Activated CD8-positive, alpha-beta T cell treated with anti-CD3 and anti-CD28 coated beads for 36 hours (primary cell): ENCODE measurements at regions of chr2 and their contacts with region 1.

Region 1: DNA sequence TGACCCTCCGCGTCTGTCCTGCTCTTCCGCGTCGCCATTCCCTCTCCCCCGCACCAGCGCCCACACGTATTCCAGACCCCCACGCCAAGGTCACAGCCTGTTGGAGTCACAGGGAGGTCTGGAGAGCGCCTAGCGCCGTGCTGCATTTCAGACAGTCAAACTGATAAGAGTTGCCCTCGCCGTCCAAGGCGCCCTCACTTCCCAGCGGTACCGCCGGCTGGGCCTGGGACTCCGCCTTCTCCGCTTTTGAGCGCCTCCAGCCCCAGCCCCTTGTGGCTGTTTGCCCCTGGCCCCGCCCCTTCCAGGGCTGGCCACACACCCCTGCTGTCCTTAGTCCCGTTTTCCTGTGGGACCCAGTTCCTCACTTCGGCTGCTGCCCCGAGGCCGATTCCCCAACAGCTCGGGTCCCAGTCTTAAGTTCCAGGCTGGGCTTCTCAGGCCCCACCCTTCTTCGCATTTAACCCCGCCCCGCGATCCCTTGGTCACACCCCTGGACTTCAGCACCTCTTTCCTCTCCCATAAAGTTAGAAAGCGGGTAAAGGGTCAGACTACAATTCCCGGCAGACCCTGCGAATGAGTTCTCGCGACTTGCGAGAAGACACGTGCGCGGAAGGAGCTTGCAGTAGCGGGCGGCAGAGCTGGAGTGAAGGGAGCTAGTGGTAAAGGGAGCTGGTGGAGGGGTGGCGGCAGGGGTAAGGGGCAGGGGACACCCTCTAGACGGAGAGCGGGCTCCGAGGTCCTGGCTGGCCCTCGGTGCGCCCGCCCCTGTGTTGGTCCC is at the start of gene GMPPA:
- DNase-seq: peak; percentile 97
- ATAC-seq: peak; percentile 96
- H3K4me3 Mint-ChIP-seq: peak within 1 kb of the TSS; percentile 92
- H3K27ac Mint-ChIP-seq: peak within 1 kb of the TSS; percentile 87
- H3K4me1 Mint-ChIP-seq: peaks cover 34% of the 10 kb centered on the region
- H3K27me3 Mint-ChIP-seq: peaks cover 43% of the 10 kb centered on the region
- CTCF ChIP-seq: no peak
- total RNA-seq, gene GMPPA: 32.4 to 34.2 TPM

Region 2: DNA sequence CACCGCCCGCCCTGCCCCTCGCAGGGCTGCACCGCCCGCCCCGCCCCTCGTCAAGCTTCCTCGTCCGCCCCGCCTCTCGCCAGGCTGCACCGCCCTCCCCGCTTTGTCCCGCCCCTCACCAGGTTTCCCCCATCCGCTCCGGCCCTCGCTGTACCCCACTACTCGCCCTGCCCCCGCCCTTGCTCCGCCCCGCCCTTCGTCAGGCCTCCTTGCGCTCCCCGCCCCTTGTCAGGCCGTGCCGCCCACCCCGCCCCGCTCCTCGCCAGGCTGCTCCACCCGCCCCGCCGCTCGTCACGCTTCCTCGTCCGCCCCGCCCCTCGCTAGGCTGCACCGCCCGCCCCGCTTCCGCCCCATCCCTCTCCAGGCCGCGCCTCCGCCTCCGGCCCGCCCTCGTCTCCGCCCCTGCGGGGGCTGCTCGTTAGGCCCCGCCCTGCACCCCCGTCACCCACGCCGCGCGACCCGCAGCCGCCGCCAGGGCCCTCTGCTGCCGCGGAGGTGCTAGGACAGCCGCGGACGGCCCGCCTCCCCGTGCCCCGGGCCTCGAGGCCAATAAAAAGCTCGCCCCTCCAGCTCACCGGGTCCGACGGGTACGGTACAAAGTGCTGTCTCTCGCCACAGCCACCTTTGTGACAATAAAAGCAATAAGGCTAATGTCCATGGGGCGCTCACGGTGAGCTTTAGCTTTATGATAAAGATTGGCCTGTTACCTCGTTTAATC is 110.2 kb before region 1 on chr2:
- CTCF ChIA-PET with region 1: interaction called, 15 read pairs
- POLR2A ChIA-PET with region 1: interaction called, 4 read pairs
- intact Hi-C with region 1: no loop called
- DNase-seq: peak; percentile 99
- ATAC-seq: peak; percentile 81
- H3K4me3 Mint-ChIP-seq: peak overlapping the region; percentile 72
- H3K27ac Mint-ChIP-seq: peak overlapping the region; percentile 85
- H3K4me1 Mint-ChIP-seq: peaks cover 21% of the 10 kb centered on the region
- H3K27me3 Mint-ChIP-seq: no peaks in the 10 kb centered on the region
- CTCF ChIP-seq: peak; percentile 58

Region 3: GRCh38 chr2:219459460-219460311 is 38.8 kb before region 1 on chr2:
- CTCF ChIA-PET with region 1: interaction called, 10 read pairs
- POLR2A ChIA-PET with region 1: no interaction called
- intact Hi-C with region 1: no loop called
- DNase-seq: peak; percentile 62
- ATAC-seq: peak; percentile 50
- H3K4me3 Mint-ChIP-seq: no peak overlapping the region
- H3K27ac Mint-ChIP-seq: peak overlapping the region; percentile 25
- H3K4me1 Mint-ChIP-seq: peaks cover 14% of the 10 kb centered on the region
- H3K27me3 Mint-ChIP-seq: no peaks in the 10 kb centered on the region
- CTCF ChIP-seq: peak; percentile 84

Region 4: DNA sequence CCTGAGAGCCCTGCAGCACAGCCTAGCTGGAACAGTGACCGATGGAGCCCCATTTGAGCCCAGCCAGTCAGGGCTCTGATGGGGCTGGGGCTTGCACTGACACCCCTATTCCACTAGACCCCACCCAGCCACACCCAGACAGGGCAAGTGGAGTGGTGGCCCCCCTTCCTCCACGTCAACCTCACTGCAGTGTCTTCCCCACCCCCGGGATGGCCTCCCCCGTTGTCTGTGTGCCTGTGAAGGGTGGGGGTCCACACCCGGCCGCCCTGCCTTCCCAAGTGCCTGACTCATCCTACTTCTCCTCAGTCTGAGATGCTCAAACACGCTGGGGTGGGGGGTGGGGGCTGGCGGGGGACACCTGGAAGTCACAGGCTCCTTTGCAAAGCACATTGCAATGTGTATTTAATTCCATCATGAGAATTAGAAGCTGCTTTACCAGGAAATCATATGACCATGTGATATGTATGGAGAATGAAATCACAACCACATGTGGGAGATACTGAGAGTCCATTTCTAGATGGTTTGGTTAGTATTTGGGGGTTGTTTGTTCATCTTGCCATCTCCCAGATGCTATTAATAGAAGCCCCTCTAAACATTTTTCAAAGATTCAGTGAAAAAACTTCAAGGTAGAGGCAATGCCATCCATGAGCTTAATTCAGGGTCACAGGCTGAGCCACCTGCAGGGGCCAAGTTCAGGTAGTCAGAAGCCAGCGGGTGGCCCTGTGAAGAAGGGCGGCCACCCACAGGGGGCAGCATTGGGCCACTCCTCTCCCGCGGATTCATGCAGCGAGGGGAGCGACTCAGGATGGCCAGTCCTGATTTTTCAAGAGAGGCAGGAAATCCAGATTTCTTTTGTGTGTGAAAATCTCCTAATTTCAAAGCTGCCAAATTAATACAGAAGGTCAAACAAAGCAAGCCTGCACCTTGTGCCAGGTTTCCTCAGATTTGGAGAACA is 22.5 kb before region 1 on chr2:
- CTCF ChIA-PET with region 1: interaction called, 19 read pairs
- POLR2A ChIA-PET with region 1: no interaction called
- intact Hi-C with region 1: no loop called
- DNase-seq: peak; percentile 84
- ATAC-seq: peak; percentile 96
- H3K4me3 Mint-ChIP-seq: no peak overlapping the region
- H3K27ac Mint-ChIP-seq: no peak overlapping the region
- H3K4me1 Mint-ChIP-seq: peaks cover 2% of the 10 kb centered on the region
- H3K27me3 Mint-ChIP-seq: no peaks in the 10 kb centered on the region
- CTCF ChIP-seq: peak; percentile 75

Region 5: GRCh38 chr2:219484343-219485200 is 13.9 kb before region 1 on chr2:
- CTCF ChIA-PET with region 1: interaction called, 41 read pairs
- POLR2A ChIA-PET with region 1: interaction called, 3 read pairs
- intact Hi-C with region 1: no loop called
- DNase-seq: no peak
- ATAC-seq: peak; percentile 54
- H3K4me3 Mint-ChIP-seq: peak overlapping the region; percentile 21
- H3K27ac Mint-ChIP-seq: no peak overlapping the region
- H3K4me1 Mint-ChIP-seq: peaks cover 3% of the 10 kb centered on the region
- H3K27me3 Mint-ChIP-seq: peaks cover 39% of the 10 kb centered on the region
- CTCF ChIP-seq: no peak

Region 6: GRCh38 chr2:219509780-219510511 is 11.5 kb after region 1 on chr2:
- CTCF ChIA-PET with region 1: interaction called, 86 read pairs
- POLR2A ChIA-PET with region 1: interaction called, 4 read pairs
- intact Hi-C with region 1: no loop called
- DNase-seq: peak; percentile 69
- ATAC-seq: peak; percentile 89
- H3K4me3 Mint-ChIP-seq: no peak overlapping the region
- H3K27ac Mint-ChIP-seq: no peak overlapping the region
- H3K4me1 Mint-ChIP-seq: peaks cover 18% of the 10 kb centered on the region
- H3K27me3 Mint-ChIP-seq: peaks cover 44% of the 10 kb centered on the region
- CTCF ChIP-seq: peak; percentile 53

Region 7: DNA sequence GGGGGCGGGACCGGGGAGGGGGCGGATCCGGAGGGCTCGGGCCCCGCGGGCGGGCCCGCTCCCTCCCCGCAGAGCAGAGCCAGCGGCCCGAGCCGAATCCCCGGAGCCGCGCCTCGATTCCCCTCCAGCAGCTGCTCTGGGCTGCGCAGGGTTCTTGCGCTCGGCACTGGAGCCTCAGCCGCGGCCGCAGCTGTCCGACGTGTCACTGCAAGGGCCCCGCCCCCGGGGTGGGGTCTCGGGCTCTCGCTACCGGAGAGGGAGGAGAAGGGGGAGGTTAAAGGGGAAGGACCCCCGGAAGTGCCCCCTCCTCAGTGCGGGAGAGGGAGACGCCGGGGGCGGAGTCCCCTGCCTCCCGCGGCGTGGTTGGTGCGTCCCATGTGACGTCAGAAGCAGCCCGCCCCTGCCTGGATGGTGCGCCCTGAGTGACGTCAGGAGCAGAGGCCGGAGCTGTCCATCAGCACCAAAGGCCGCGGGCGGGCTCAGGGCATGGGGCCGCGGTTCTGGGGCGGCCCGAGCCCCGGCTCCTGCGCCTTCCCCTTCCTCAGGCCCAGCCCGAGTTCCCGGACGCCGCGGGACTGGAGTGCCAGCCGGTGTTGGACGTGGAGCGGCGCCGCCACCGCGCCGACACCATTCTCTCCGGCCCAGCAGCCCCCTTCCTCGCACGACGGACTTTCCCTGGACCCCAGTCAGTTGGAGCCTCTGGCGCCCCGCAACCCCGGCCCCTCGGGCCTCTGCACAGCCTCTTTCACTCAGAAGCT is 45.3 kb after region 1 on chr2 and contains the starts of genes CHPF and TMEM198:
- CTCF ChIA-PET with region 1: interaction called, 62 read pairs
- POLR2A ChIA-PET with region 1: no interaction called
- intact Hi-C with region 1: no loop called
- DNase-seq: peak; percentile 97
- ATAC-seq: peak; percentile 85
- H3K4me3 Mint-ChIP-seq: peak within 1 kb of the TSS; percentile 93
- H3K27ac Mint-ChIP-seq: peak within 1 kb of the TSS; percentile 77
- H3K4me1 Mint-ChIP-seq: peaks cover 21% of the 10 kb centered on the region
- H3K27me3 Mint-ChIP-seq: peaks cover 15% of the 10 kb centered on the region
- CTCF ChIP-seq: no peak
- total RNA-seq, gene CHPF: 16.6 to 18.4 TPM
- total RNA-seq, gene TMEM198: 2.1 to 2.2 TPM